Common myeloid progenitor, CD34-positive (primary cell): ENCODE measurements at regions of chr17 and their contacts with region 1.

Region 1: DNA sequence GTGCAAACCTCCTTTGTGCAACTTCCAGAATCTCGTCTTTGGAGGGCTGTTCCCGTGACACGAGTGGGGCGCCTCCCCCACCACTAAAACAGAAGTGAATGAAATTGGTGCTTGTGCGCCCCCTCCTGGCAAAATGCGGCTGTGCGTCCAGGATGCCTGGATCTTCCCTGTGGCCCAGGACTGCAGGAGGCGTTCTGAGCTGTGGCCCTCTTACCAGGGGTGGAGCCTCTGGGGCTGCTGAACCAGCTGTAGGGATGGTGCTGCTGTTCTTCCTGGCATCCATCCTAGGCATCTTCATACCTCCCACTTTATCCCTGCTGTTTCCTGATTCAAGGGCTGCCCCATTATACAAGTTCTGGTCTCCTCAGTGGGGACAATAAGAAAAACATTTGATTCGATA is 18.5 kb upstream of the NAGLU start:
- DNase-seq: peak; percentile 79 to 84 (median 79)
- H3K4me3 ChIP-seq: peak overlapping the region in 1 of 7 experiments; percentile 25
- H3K27ac ChIP-seq: peak overlapping the region; percentile 16 to 71
- H3K4me1 ChIP-seq: peaks cover 26 to 69% (median 62%) of the 10 kb centered on the region in 4 experiments
- H3K27me3 ChIP-seq: no peaks in the 10 kb centered on the region

Region 2: DNA sequence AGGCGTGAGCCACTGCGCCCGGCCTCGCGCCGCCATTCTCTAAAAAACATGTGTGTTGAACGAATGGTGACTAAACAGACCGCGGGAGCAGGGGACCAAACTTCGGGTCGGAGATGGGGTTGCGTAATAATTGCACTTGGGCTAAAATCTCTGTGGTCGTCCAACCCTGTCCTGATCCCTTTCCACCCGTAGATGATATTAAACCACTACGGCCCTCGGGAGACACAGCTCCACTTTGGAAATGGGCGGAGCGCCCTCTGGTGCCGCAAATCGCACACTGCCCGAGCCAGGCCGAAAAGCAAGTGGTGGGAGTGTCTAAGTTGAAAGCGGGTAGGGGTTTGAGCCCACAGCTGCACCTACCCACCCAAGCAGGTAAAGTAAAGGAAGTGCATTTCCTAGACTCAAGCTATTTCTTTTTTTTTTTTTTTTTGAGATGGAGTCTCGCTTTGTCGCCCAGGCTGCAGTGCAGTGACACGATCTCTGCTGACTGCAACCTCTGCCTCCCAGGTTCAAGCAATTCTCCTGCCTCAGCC is 111.5 kb before region 1 on chr17:
- CTCF ChIA-PET with region 1: interaction called, 13 read pairs
- POLR2A ChIA-PET with region 1: no interaction called
- DNase-seq: peak; percentile 77 to 82 (median 82)
- H3K4me3 ChIP-seq: no peak overlapping the region
- H3K27ac ChIP-seq: no peak overlapping the region
- H3K4me1 ChIP-seq: peaks cover 0 to 47% (median 39%) of the 10 kb centered on the region in 4 experiments
- H3K27me3 ChIP-seq: no peaks in the 10 kb centered on the region

Region 3: DNA sequence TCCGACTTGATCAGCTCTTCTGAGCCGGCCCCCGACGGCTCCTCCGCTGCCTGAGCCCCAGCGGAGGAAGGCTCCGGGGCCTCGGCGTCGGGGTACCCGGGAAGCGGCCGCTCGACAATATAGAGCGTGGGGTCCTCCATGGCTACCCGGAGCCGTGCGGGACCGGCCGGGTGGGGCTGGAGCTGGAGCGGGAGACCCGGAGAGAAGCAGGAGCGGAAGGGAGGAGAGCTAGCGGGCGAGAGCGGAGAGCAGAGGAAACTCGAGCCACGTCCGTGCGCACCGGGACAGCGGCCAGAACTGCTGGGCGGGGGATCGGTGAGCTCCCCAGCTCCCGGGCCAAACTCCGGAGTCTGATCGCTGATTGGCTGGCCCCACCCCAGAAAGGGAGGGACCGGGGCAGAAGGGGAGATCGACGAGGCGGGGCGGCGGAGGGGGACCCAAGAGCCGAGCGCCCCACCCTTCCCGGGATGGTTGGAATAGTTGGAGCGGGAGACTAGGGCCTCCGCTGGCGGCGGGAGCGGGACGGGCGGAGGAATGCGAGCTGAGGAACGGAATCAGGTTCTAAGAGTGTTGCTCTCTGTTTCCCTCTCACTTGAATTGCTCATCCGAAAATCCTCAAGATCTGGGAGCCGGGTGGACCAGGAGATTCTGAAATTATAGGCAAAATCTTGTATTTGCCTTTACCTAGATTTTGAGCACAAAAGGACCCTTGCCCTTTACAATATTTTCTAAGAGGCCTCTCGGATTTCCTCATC is 94.4 kb before region 1 on chr17 and contains the start of gene CAVIN1:
- CTCF ChIA-PET with region 1: interaction called, 12 read pairs
- POLR2A ChIA-PET with region 1: interaction called, 4 read pairs
- DNase-seq: peak; percentile 68 to 71 (median 71)
- H3K4me3 ChIP-seq: peak within 1 kb of the TSS; percentile 66 to 93 (median 83)
- H3K27ac ChIP-seq: peak within 1 kb of the TSS in 1 of 2 experiments; percentile 66
- H3K4me1 ChIP-seq: peaks cover 0 to 45% (median 41%) of the 10 kb centered on the region in 4 experiments
- H3K27me3 ChIP-seq: peaks cover 0 to 3% (median 0%) of the 10 kb centered on the region in 5 experiments

Region 4: GRCh38 chr17:42438600-42439567 is 78.6 kb before region 1 on chr17:
- CTCF ChIA-PET with region 1: interaction called, 12 read pairs
- POLR2A ChIA-PET with region 1: no interaction called
- DNase-seq: peak in 2 of 3 donors; percentile 62 to 64
- H3K4me3 ChIP-seq: no peak overlapping the region
- H3K27ac ChIP-seq: no peak overlapping the region
- H3K4me1 ChIP-seq: peaks cover 0 to 18% (median 4%) of the 10 kb centered on the region in 4 experiments
- H3K27me3 ChIP-seq: no peaks in the 10 kb centered on the region

Region 5: GRCh38 chr17:42493319-42493718 is 24.2 kb before region 1 on chr17:
- CTCF ChIA-PET with region 1: interaction called, 25 read pairs
- POLR2A ChIA-PET with region 1: no interaction called
- DNase-seq: peak in 2 of 3 donors; percentile 20 to 50
- H3K4me3 ChIP-seq: no peak overlapping the region
- H3K27ac ChIP-seq: no peak overlapping the region
- H3K4me1 ChIP-seq: peaks cover 0 to 14% (median 11%) of the 10 kb centered on the region in 4 experiments
- H3K27me3 ChIP-seq: no peaks in the 10 kb centered on the region

Region 6: DNA sequence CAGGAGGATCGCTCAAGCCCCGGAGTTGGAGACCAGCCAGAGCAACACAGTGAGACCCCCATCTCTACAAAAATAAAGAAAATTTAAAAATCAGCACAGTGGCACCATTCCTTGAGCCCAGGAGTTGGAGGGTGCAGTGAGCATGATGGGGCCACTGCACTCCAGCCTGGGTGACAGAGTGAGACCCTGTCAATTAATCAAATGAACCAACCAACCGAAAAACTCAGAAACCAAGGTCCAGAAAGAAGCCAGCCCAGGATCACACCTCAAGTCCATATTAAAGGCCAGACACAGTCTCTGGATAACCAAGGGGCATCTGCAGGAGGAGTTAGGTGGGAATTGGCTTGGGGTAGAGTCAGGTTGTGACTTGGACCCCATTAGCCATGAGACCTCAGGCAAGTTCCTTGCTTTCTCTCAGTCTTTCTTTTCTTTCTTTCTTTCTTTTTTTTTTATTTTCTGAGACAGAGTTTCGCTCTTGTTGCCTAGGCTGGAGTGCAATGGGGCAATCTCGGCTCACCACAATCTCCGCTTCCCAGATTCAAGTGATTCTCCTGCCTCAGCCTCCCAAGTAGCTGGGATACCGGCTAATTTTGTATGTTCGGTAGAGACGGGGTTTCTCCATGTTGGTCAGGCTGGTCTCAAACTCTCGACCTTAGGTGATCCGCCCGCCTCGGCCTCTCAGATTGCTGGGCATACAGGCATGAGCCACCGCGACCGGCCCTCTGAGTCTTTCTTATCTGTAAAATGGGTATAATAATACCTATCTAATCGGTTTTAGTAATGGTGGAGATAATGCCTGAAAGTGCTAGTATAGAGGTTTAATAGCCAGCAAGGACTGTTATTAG is 37.8 kb after region 1 on chr17:
- CTCF ChIA-PET with region 1: no interaction called
- POLR2A ChIA-PET with region 1: no interaction called
- DNase-seq: no peak
- H3K4me3 ChIP-seq: peak overlapping the region; percentile 63 to 95 (median 88)
- H3K27ac ChIP-seq: peak overlapping the region; percentile 87 to 92
- H3K4me1 ChIP-seq: peaks cover 3 to 20% (median 14%) of the 10 kb centered on the region in 4 experiments
- H3K27me3 ChIP-seq: no peaks in the 10 kb centered on the region